Lower leg skin (tissue), 4 donors: ENCODE measurements at regions of chr21 and their contacts with region 1.

Region 1: GRCh38 chr21:36113647-36114428 is 21.0 kb upstream of the CBR3 start:
- DNase-seq: no peak
- H3K4me3 ChIP-seq: no peak overlapping the region
- CTCF ChIP-seq: no peak
- POLR2A ChIP-seq: no peak

Region 2: GRCh38 chr21:35850029-35850428 is 263.8 kb before region 1 on chr21:
- intact Hi-C with region 1: loop called (anchors 10 kb)
- DNase-seq: peak in 1 of 2 donors; percentile 27
- H3K4me3 ChIP-seq: no peak overlapping the region
- CTCF ChIP-seq: no peak
- POLR2A ChIP-seq: no peak